PC-9 (cell line): ENCODE measurements at regions of chr18 and their contacts with region 1.

Region 1: GRCh38 chr18:62714671-62715435 is 488 bp upstream of the PHLPP1 start:
- DNase-seq: peak; percentile 96 to 98
- H3K4me3 ChIP-seq: peak overlapping the region; percentile 60; the same call in 1 of the 2 replicates
- H3K27ac ChIP-seq: peak overlapping the region; percentile 28; the same call in 1 of the 2 replicates
- H3K4me1 ChIP-seq: peaks cover 16% of the 10 kb centered on the region
- H3K27me3 ChIP-seq: no peaks in the 10 kb centered on the region
- CTCF ChIP-seq: peak; percentile 67

Region 2: DNA sequence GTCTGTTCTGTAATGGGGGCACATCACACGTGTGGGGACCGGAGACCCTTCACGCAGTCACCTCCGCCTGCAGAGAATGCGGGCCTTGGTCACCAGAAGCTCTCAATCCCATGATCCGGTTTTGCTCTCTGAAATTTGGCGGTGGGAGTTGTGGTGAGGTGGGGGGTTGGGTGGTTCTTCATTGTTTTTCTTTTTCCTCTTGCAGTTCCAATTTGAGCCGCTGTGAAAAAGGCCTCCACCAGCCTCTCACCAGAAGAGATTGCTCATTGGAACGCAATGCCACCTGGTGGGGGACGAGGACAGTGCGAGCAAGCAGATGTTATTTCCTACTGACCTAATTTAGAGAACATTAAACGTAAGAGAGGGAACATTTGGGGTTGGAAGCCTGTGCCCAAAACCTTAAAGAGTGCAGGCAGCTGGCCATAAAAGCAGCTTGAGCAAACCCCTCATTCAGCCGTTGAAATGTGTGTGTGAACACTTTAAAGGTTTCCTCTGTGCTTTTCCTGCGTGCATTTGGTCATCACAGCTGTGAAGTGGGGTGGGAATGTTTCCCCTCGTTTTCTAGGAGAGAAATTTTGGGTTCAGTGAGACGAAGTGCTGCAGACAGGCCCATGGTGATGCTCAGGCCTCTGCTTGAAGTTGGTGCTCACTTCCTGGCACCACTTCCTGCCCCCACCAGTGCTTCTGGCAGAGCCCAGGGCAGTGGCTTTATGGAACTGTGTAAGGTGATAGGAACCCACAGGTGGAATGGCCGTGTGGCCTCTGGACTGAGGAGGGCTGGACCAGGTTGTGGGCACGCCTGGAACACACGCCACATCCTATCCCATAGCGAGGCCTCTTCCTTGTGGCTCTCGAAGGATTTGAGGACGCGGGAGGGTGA is 130.4 kb before region 1 on chr18:
- CTCF ChIA-PET with region 1: interaction called, 11 read pairs
- POLR2A ChIA-PET with region 1: no interaction called
- intact Hi-C with region 1: loop called (anchors 2 kb)
- DNase-seq: peak; percentile 68 to 75
- H3K4me3 ChIP-seq: no peak overlapping the region
- H3K27ac ChIP-seq: no peak overlapping the region
- H3K4me1 ChIP-seq: no peaks in the 10 kb centered on the region
- H3K27me3 ChIP-seq: no peaks in the 10 kb centered on the region
- CTCF ChIP-seq: peak; percentile 93

Region 3: GRCh38 chr18:62784966-62785413 is 70.1 kb after region 1 on chr18:
- CTCF ChIA-PET with region 1: no interaction called
- POLR2A ChIA-PET with region 1: no interaction called
- intact Hi-C with region 1: loop called (anchors 10 kb)
- DNase-seq: no peak
- H3K4me3 ChIP-seq: no peak overlapping the region
- H3K27ac ChIP-seq: no peak overlapping the region
- H3K4me1 ChIP-seq: peaks cover 44% of the 10 kb centered on the region
- H3K27me3 ChIP-seq: no peaks in the 10 kb centered on the region
- CTCF ChIP-seq: no peak

Region 4: DNA sequence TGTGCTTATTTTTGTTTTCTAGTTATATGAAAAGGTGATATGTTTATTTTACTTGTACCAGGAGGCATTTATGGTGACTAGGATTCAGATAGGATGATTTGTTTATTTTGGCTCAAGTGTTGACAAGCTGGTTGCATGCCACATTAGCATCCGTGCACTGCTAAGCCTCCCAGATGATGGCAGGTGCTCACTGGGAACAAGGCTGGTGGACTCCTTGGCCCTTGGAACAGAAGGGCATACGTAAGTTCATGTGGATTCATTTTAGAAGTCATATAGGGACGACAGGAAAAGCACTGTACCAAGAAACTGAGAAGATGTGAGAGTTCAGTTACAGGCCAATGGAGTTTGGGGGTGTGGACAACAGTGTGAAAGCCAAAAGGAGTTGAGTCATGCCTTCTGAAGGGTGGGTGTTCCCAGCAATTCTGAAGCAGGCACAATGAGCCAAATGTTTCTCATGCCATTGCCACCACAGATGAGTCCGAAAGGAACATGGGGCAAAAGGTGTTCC is 166.7 kb after region 1 on chr18:
- CTCF ChIA-PET with region 1: interaction called, 3 read pairs
- POLR2A ChIA-PET with region 1: no interaction called
- intact Hi-C with region 1: loop called (anchors 2 kb)
- DNase-seq: peak; percentile 75 to 97
- H3K4me3 ChIP-seq: peak overlapping the region; percentile 10; the same call in 1 of the 2 replicates
- H3K27ac ChIP-seq: peak overlapping the region; percentile 81
- H3K4me1 ChIP-seq: peaks cover 80% of the 10 kb centered on the region
- H3K27me3 ChIP-seq: no peaks in the 10 kb centered on the region
- CTCF ChIP-seq: no peak

Region 5: GRCh38 chr18:62982600-62983251 is 267.9 kb after region 1 on chr18:
- CTCF ChIA-PET with region 1: no interaction called
- POLR2A ChIA-PET with region 1: no interaction called
- intact Hi-C with region 1: loop called (anchors 1 kb)
- DNase-seq: peak in 1 of 2 experiments; percentile 36
- H3K4me3 ChIP-seq: no peak overlapping the region
- H3K27ac ChIP-seq: no peak overlapping the region
- H3K4me1 ChIP-seq: peaks cover 7% of the 10 kb centered on the region
- H3K27me3 ChIP-seq: no peaks in the 10 kb centered on the region
- CTCF ChIP-seq: peak; percentile 90